ENCODE measurements at regions of chr5 and their contacts with region 1.

Region 1: GRCh38 chr5:94524841-94525697 is 93.3 kb downstream of the KIAA0825 start:
- DNase-seq: no peak
- ATAC-seq: no peak
- H3K4me3 ChIP-seq: no peak overlapping the region
- H3K27ac ChIP-seq: no peak overlapping the region
- H3K4me1 ChIP-seq: no peaks in the 10 kb centered on the region
- H3K27me3 ChIP-seq: no peaks in the 10 kb centered on the region

Region 2: GRCh38 chr5:94700592-94700991 is 175.5 kb after region 1 on chr5:
- intact Hi-C with region 1: no loop called
- DNase-seq: no peak
- ATAC-seq: no peak
- H3K4me3 ChIP-seq: no peak overlapping the region
- H3K27ac ChIP-seq: no peak overlapping the region
- H3K4me1 ChIP-seq: peaks cover 0 to 1% of the 10 kb centered on the region in 2 donors
- H3K27me3 ChIP-seq: no peaks in the 10 kb centered on the region

Region 3: DNA sequence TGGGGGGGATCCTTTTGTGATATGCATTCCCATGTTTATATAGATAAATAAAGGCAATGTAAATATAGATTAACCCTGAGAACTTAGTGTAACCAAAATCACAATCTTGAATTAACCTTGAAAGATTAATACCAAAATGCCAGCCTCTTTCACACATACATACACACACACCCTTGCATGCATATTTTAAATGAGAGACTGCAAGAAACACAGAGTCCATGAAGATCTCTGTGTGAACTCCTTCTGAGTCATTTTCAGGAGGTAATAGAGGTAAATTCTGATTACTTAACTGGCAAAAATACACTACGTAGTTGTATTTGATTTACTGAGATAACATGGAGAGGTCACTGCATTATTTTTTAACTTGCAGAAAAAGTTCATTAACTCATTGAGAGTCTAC is 211.4 kb after region 1 on chr5:
- intact Hi-C with region 1: loop called in 1 of 2 experiments (anchors 5 kb)
- DNase-seq: no peak
- ATAC-seq: no peak
- H3K4me3 ChIP-seq: no peak overlapping the region
- H3K27ac ChIP-seq: no peak overlapping the region
- H3K4me1 ChIP-seq: no peaks in the 10 kb centered on the region
- H3K27me3 ChIP-seq: no peaks in the 10 kb centered on the region